Calu3 (cell line): ENCODE measurements at regions of chr2 and their contacts with region 1.

Region 1: DNA sequence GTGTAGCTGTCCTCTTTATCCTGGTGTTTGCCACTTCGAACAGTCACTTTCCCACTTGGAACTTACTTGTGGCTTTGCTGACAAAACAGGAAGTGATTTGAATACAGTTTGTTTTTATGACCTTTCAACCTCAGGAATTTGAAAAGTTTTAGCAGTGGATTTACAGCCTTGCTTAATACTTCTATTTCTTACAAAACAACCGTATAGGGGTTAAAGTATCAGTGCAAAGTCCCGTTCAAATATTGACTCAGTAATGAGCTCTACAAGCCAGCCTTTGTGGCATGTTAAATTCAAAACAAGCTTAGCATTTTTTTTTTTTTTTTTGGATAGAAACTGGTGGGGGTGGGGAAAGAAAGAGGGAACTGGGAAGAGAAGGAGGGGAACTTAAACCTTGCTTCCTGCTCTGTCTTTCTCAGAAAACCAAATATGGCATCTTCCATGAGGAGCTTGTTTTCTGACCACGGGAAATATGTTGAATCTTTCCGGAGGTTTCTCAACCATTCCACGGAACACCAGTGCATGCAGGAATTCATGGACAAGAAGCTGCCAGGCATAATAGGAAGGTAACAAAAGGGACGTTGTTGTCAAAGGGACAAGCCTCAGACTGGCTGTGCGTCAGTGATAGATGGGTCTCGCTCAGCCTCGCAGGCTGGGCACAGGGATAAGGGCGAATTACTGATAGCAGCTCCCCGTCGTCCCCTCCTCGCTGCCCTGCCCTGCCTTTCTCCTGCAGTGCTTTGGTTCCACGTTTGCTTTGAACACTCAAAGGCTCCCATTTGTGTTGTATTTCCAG is at the start of gene HNMT:
- DNase-seq: peak; percentile 60
- H3K4me3 Mint-ChIP-seq: peak within 1 kb of the TSS; percentile 88
- H3K27ac Mint-ChIP-seq: peak within 1 kb of the TSS; percentile 99
- H3K4me1 Mint-ChIP-seq: peaks cover 53% of the 10 kb centered on the region
- H3K27me3 Mint-ChIP-seq: no peaks in the 10 kb centered on the region
- CTCF ChIP-seq: no peak
- total RNA-seq, gene HNMT: 56.5 and 68.2 TPM in 2 replicates

Region 2: GRCh38 chr2:137947728-137948336 is 16.4 kb before region 1 on chr2:
- CTCF ChIA-PET with region 1: interaction called, 17 read pairs
- intact Hi-C with region 1: no loop called
- DNase-seq: peak; percentile 77
- H3K4me3 Mint-ChIP-seq: no peak overlapping the region
- H3K27ac Mint-ChIP-seq: peak overlapping the region; percentile 44
- H3K4me1 Mint-ChIP-seq: peaks cover 77% of the 10 kb centered on the region
- H3K27me3 Mint-ChIP-seq: no peaks in the 10 kb centered on the region
- CTCF ChIP-seq: peak; percentile 37

Region 3: DNA sequence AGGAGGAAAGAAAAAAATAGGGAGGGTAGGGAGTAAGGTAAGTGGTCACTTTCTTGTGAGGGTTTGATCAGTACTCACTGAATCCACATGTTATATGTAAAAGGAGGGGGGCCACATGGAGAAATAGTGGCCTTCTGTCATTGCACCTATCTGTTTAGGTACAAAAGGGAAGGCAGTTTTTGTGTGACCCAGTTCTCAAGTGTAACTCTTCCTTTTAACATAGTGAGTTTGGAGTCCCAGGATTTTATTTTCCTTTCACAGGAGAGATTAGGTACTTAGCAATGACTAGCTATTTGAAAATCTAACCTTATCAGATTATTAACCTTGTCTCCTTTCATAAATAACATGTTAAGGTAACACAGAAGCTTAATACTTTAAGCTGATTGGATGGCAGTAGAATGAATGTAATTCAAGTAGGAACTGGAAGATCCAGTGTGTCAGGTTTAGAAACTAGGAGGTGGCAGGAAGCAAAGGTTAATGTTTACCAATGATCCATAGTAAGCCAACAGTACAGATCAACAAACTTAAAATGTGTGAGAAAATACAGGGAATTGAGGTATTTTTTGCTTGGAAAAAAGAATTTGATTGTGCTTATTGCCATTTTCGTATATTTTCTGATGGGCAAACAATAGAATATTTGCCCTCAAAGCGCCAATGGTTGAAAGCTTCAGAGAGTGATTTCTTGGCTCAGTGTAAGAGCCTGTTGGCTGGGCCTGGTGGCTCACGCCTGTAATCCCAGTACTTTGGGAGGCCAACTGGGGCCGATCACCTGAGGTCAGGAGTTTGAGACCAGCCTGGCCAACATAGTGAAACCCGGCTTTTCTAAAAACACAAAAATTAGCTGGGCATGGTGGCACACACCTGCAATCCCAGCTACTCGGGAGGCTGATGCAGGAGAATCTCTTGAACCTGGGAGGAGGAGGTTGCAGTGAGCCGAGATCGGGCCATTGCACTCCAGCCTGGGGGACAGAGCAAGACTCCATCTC is 11.3 kb after region 1 on chr2:
- CTCF ChIA-PET with region 1: interaction called, 12 read pairs
- intact Hi-C with region 1: no loop called
- DNase-seq: peak; percentile 59
- H3K4me3 Mint-ChIP-seq: peak overlapping the region; percentile 41
- H3K27ac Mint-ChIP-seq: peak overlapping the region; percentile 87
- H3K4me1 Mint-ChIP-seq: peaks cover 49% of the 10 kb centered on the region
- H3K27me3 Mint-ChIP-seq: no peaks in the 10 kb centered on the region
- CTCF ChIP-seq: no peak

Region 4: DNA sequence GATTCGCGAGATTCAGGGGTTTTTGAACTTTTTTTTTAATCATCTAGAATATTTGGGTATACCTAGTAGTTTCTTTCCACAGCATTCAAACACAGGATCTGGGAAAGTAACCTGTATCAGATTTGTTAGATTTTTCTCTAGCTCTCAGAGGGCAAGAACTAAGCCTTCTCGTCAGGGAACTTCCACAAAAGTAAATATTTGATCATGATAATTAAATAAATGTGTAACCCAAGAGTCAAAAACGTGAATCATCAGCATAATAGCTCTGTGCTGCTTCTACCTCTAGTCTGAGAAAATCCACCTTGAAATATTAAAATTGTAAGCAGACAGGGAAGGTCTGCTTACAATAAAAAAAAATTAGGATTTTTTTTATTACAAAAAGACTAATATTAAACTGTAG is 311.6 kb after region 1 on chr2:
- CTCF ChIA-PET with region 1: no interaction called
- intact Hi-C with region 1: loop called (anchors 10 kb)
- DNase-seq: no peak
- H3K4me3 Mint-ChIP-seq: peak overlapping the region; percentile 33
- H3K27ac Mint-ChIP-seq: peak overlapping the region; percentile 63
- H3K4me1 Mint-ChIP-seq: peaks cover 41% of the 10 kb centered on the region
- H3K27me3 Mint-ChIP-seq: no peaks in the 10 kb centered on the region
- CTCF ChIP-seq: no peak